ENCODE measurements at regions of chr5 and their contacts with region 1.

Region 1: GRCh38 chr5:132369474-132370180 is at the start of gene SLC22A5:
- DNase-seq: peak; percentile 67 to 77 (median 72)
- H3K4me3 ChIP-seq: peak within 1 kb of the TSS; percentile 20 to 72
- H3K4me3 Mint-ChIP-seq: peak within 1 kb of the TSS; percentile 83 to 91 (median 87)
- H3K27ac ChIP-seq: peak within 1 kb of the TSS; percentile 74
- H3K27ac Mint-ChIP-seq: peak within 1 kb of the TSS; percentile 70 to 93 (median 88)
- H3K4me1 ChIP-seq: peaks cover 31% of the 10 kb centered on the region
- H3K4me1 Mint-ChIP-seq: peaks cover 13 to 32% (median 26%) of the 10 kb centered on the region in 4 donors
- H3K27me3 ChIP-seq: no peaks in the 10 kb centered on the region
- H3K27me3 Mint-ChIP-seq: no peaks in the 10 kb centered on the region
- total RNA-seq, gene SLC22A5: 8.9 to 10.0 TPM

Region 2: DNA sequence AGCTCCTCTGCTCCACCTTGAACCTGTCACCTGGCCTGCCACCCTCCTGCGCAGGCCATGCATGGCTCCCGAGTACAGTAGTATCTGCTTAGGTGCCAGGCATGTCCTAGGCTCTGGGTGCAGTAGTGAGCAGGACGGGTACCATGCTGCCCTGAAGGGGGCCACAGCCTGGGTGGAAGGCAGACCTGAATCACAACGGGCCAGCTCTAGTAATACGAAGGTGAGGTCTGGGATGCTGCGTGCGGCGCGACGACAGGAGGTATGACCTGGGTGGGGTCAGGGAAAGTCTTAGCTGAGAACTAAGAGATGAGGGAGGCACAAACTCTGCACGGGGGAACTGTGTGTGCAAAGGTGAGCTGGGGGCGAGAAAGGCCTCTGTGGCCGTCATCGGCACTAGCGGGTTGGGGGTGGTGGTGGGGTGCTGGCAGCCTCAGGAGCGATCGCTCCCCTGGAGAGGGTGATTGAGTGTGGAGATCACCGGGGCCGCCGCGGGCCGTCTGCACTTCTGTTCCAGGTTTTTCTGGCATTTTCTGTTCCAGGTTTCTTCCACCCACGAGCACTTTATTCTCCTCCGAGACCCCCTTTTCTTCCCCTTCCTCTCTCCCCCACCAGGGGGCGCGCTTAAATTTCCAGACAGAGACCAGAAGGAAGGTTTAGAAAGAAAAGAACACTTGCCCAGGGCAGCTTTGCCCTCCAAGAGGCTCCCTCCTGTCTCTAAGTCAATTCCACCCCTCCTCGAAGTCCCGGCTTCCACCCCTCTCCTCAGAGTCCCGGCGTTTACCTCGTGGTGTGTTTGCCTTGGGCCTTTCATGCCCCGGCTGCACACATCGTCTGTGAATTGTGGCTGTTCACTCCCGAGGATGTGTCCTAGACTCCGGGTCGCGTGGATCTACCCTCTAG is 97.1 kb before region 1 on chr5:
- CTCF ChIA-PET with region 1: no interaction called
- POLR2A ChIA-PET with region 1: no interaction called
- intact Hi-C with region 1: loop called (anchors 5 kb)
- DNase-seq: peak; percentile 32 to 54 (median 47)
- H3K4me3 ChIP-seq: no peak overlapping the region
- H3K4me3 Mint-ChIP-seq: peak overlapping the region in 4 of 8 donors; percentile 6 to 61 (median 41)
- H3K27ac ChIP-seq: no peak overlapping the region
- H3K27ac Mint-ChIP-seq: peak overlapping the region in 1 of 7 donors; percentile 12
- H3K4me1 ChIP-seq: no peaks in the 10 kb centered on the region
- H3K4me1 Mint-ChIP-seq: peaks cover 0 to 22% (median 12%) of the 10 kb centered on the region in 4 donors
- H3K27me3 ChIP-seq: no peaks in the 10 kb centered on the region
- H3K27me3 Mint-ChIP-seq: peaks cover 6 to 16% of the 10 kb centered on the region in 2 donors

Region 3: GRCh38 chr5:132293066-132293991 is 76.3 kb before region 1 on chr5:
- CTCF ChIA-PET with region 1: interaction called, 9 read pairs
- POLR2A ChIA-PET with region 1: interaction called, 4 read pairs
- intact Hi-C with region 1: loop called (anchors 1 kb)
- DNase-seq: peak; percentile 36 to 78 (median 39)
- H3K4me3 ChIP-seq: peak overlapping the region; percentile 32 to 61
- H3K4me3 Mint-ChIP-seq: peak overlapping the region; percentile 82 to 92 (median 90)
- H3K27ac ChIP-seq: peak overlapping the region; percentile 45
- H3K27ac Mint-ChIP-seq: peak overlapping the region in 5 of 7 donors; percentile 22 to 82 (median 57)
- H3K4me1 ChIP-seq: peaks cover 18% of the 10 kb centered on the region
- H3K4me1 Mint-ChIP-seq: peaks cover 7 to 22% (median 10%) of the 10 kb centered on the region in 4 donors
- H3K27me3 ChIP-seq: no peaks in the 10 kb centered on the region
- H3K27me3 Mint-ChIP-seq: peaks cover 11 to 16% of the 10 kb centered on the region in 2 donors

Region 4: GRCh38 chr5:132334812-132335211 is 34.8 kb before region 1 on chr5:
- CTCF ChIA-PET with region 1: no interaction called
- POLR2A ChIA-PET with region 1: no interaction called
- intact Hi-C with region 1: no loop called
- DNase-seq: peak in 2 of 5 donors; percentile 5 to 6
- H3K4me3 ChIP-seq: no peak overlapping the region
- H3K4me3 Mint-ChIP-seq: no peak overlapping the region
- H3K27ac ChIP-seq: no peak overlapping the region
- H3K27ac Mint-ChIP-seq: no peak overlapping the region
- H3K4me1 ChIP-seq: no peaks in the 10 kb centered on the region
- H3K4me1 Mint-ChIP-seq: peaks cover 0 to 3% (median 0%) of the 10 kb centered on the region in 4 donors
- H3K27me3 ChIP-seq: no peaks in the 10 kb centered on the region
- H3K27me3 Mint-ChIP-seq: no peaks in the 10 kb centered on the region

Region 5: GRCh38 chr5:132866342-132867045 is 496.9 kb after region 1 on chr5 and contains the starts of genes GDF9 and UQCRQ:
- CTCF ChIA-PET with region 1: no interaction called
- POLR2A ChIA-PET with region 1: no interaction called
- intact Hi-C with region 1: no loop called
- DNase-seq: peak; percentile 92 to 98 (median 96)
- H3K4me3 ChIP-seq: peak within 1 kb of the TSS; percentile 79 to 90
- H3K4me3 Mint-ChIP-seq: peak within 1 kb of the TSS; percentile 95 to 100 (median 100)
- H3K27ac ChIP-seq: peak within 1 kb of the TSS; percentile 93
- H3K27ac Mint-ChIP-seq: peak within 1 kb of the TSS; percentile 96 to 100 (median 100)
- H3K4me1 ChIP-seq: peaks cover 21% of the 10 kb centered on the region
- H3K4me1 Mint-ChIP-seq: peaks cover 18 to 29% (median 22%) of the 10 kb centered on the region in 4 donors
- H3K27me3 ChIP-seq: no peaks in the 10 kb centered on the region
- H3K27me3 Mint-ChIP-seq: no peaks in the 10 kb centered on the region
- total RNA-seq, gene GDF9: 1.1 to 1.9 TPM
- total RNA-seq, gene UQCRQ: 124 to 127 TPM

Region 6: GRCh38 chr5:133652951-133653759 is 1283.5 kb after region 1 on chr5:
- CTCF ChIA-PET with region 1: no interaction called
- POLR2A ChIA-PET with region 1: no interaction called
- intact Hi-C with region 1: no loop called
- DNase-seq: no peak
- H3K4me3 ChIP-seq: no peak overlapping the region
- H3K4me3 Mint-ChIP-seq: no peak overlapping the region
- H3K27ac ChIP-seq: no peak overlapping the region
- H3K27ac Mint-ChIP-seq: no peak overlapping the region
- H3K4me1 ChIP-seq: no peaks in the 10 kb centered on the region
- H3K4me1 Mint-ChIP-seq: no peaks in the 10 kb centered on the region
- H3K27me3 ChIP-seq: peaks cover 5% of the 10 kb centered on the region
- H3K27me3 Mint-ChIP-seq: peaks cover 10 to 14% of the 10 kb centered on the region in 2 donors